ENCODE measurements at regions of chr1 and their contacts with region 1.

Region 1: DNA sequence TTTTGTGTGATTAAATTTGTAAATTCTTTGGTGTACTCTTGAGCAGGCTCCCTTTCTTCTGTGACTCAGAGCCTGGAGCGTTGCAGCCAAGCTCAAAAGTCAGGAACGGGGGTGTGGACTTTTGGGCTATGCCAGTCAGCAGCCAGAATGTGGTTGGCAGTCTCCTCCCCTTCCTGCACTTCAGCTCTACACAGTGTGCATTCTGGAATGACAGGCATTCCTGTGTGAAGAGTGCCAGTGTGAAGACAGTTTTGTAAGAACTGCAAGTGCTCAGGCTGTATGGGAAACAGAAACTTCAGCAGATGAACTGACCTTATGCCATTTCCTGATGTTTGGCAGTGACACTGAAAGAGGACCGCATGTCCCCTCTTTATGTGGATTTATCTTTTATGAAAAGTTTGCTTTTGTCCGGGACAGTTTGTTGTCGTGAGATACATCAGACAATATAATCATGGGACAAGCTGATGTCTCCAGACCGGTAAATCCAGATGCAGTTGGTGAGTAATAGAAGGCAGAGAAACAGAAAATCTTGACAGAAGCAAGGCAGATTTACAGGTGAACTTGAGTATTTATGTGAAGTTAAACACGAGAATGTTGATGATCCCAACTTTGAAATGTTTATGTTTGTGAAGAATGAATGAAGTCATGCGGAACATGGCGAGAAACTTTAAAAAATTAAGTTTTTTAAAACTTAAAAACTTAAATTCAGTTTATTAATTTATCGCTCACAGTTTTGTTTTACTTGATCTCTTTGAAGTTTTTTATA is 67.7 kb upstream of the RCC1 start:
- DNase-seq: peak; percentile 64 to 86
- ATAC-seq: peak; percentile 100
- H3K4me3 ChIP-seq: peak overlapping the region; percentile 44
- H3K27ac ChIP-seq: peak overlapping the region; percentile 71 to 85
- H3K4me1 ChIP-seq: peaks cover 43% of the 10 kb centered on the region
- CTCF ChIP-seq: no peak
- EP300 ChIP-seq: no peak
- POLR2A ChIP-seq: no peak; the same call in 1 of the 2 replicates
- RAD21 ChIP-seq: no peak

Region 2: DNA sequence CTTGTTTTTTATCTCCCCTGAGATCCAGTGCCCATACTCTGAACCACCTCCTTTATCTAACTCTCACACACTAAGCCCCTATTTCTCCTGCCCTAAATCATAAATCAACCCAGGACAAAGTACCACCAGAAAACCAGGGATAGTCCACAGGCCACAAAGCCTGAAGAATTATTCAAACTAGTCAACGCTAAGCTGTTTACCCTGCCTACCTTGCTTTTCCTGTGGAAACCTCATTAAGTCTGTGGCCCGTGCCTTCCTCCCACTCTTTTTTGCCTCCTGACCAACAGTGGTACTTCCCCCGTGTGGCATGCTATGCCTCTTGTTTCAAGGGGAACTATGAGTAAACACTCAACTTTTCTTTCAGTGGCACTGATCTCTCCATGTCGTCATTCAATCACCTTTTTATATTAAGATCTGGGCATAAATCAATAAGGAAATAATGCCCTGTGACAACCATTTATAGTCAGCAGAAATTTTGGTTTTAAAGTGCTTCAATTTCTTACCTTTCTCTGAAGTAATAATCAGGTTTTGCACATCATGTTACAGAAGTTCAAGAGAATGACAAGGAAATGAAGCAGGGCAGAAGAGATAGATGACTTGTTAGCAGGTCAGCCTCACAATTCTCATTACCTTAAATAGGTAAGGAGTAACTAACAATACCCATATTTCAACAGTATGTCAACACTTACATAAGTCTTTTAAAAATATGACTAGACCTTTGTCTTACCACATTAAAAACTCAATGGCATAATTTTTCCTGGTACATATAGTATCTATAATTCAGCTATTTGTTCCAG is 381.8 kb before region 1 on chr1:
- CTCF ChIA-PET with region 1: no interaction called
- POLR2A ChIA-PET with region 1: no interaction called
- DNase-seq: no peak
- ATAC-seq: no peak
- H3K4me3 ChIP-seq: no peak overlapping the region
- H3K27ac ChIP-seq: no peak overlapping the region
- H3K4me1 ChIP-seq: no peaks in the 10 kb centered on the region
- CTCF ChIP-seq: no peak
- EP300 ChIP-seq: no peak
- POLR2A ChIP-seq: no peak
- RAD21 ChIP-seq: no peak

Region 3: GRCh38 chr1:28409090-28409489 is 29.0 kb before region 1 on chr1:
- CTCF ChIA-PET with region 1: interaction called, 10 read pairs
- POLR2A ChIA-PET with region 1: interaction called, 4 read pairs
- DNase-seq: no peak
- ATAC-seq: no peak
- H3K4me3 ChIP-seq: no peak overlapping the region
- H3K27ac ChIP-seq: no peak overlapping the region
- H3K4me1 ChIP-seq: peaks cover 8% of the 10 kb centered on the region
- CTCF ChIP-seq: no peak
- EP300 ChIP-seq: no peak
- POLR2A ChIP-seq: no peak
- RAD21 ChIP-seq: no peak

Region 4: GRCh38 chr1:28426831-28427230 is 11.3 kb before region 1 on chr1:
- CTCF ChIA-PET with region 1: interaction called, 12 read pairs
- POLR2A ChIA-PET with region 1: no interaction called
- DNase-seq: no peak
- ATAC-seq: no peak
- H3K4me3 ChIP-seq: no peak overlapping the region
- H3K27ac ChIP-seq: no peak overlapping the region
- H3K4me1 ChIP-seq: peaks cover 6% of the 10 kb centered on the region
- CTCF ChIP-seq: no peak
- EP300 ChIP-seq: no peak
- POLR2A ChIP-seq: no peak
- RAD21 ChIP-seq: no peak

Region 5: GRCh38 chr1:28456078-28456477 is 18.0 kb after region 1 on chr1:
- CTCF ChIA-PET with region 1: no interaction called
- POLR2A ChIA-PET with region 1: no interaction called
- DNase-seq: no peak
- ATAC-seq: no peak; a peak in 1 of 6 replicates
- H3K4me3 ChIP-seq: no peak overlapping the region
- H3K27ac ChIP-seq: no peak overlapping the region
- H3K4me1 ChIP-seq: peaks cover 25% of the 10 kb centered on the region; the same call in 2 of the 3 replicates
- CTCF ChIP-seq: no peak
- EP300 ChIP-seq: no peak
- POLR2A ChIP-seq: no peak
- RAD21 ChIP-seq: no peak

Region 6: DNA sequence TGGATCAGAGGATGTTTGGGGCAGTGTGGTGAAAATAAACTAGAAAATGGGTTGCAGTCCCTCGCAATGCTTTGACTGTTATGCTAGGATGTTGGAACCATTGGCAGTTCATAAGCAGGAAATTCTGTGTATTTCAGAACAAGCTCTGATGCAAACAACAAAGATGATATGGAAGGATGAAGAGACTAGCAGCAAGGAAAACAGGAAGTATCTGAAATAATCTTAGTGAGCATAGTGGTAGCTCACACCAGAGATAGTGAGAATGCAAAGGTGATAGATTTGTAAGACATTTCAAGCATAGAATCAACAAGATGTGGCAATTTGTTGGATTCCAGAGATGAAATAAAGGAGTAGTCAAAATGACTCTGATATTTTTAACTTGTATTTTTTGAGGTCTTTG is 56.6 kb after region 1 on chr1:
- CTCF ChIA-PET with region 1: no interaction called
- POLR2A ChIA-PET with region 1: no interaction called
- DNase-seq: no peak
- ATAC-seq: no peak
- H3K4me3 ChIP-seq: no peak overlapping the region
- H3K27ac ChIP-seq: no peak overlapping the region
- H3K4me1 ChIP-seq: no peaks in the 10 kb centered on the region
- CTCF ChIP-seq: no peak
- EP300 ChIP-seq: no peak
- POLR2A ChIP-seq: no peak
- RAD21 ChIP-seq: no peak

Measured in A549 (cell line).